ENCODE measurements at regions of chr6 and their contacts with region 1.

Region 1: DNA sequence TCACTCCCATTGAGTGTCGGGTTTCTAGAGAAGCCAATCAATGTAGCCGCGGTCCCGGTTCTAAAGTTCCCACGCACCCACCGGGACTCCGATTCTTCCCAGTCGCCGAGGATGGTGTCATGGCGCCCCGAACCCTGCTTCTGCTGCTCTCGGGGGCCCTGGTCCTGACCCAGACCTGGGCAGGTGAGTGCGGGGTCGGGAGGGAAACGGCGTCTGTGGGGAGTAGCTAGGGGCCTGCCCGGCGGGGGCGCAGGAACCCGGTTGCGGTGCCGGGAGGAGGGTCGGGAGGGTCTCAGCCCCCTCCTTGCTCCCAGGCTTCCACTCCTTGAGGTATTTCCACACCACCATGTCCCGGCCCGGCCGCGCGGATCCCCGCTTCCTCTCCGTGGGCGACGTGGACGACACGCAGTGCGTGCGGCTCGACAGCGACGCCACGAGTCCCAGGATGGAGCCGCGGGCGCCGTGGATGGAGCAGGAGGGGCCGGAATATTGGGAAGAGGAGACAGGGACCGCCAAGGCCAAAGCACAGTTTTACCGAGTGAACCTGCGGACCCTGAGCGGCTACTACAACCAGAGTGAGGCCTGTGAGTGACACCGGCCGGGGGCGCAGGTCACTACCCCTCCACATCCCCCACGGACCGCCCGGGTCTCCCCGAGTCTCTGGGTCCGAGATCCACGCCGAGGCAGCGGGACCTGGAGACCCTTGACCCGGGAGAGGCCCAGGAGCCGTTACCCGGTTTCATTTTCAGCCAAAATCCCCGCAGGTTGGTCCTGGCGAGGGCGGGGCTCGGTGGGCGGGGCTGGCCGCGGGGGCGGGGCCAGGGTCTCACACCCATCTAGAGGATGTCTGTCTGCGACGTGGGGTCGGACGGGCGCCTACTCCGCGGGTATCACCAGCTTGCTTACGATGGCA is 35.2 kb upstream of the HLA-G start:
- DNase-seq: peak; percentile 57 to 87
- ATAC-seq: peak; percentile 86 to 95 (median 87)
- H3K4me3 ChIP-seq: peak overlapping the region; percentile 89
- H3K4me3 Mint-ChIP-seq: peak overlapping the region; percentile 92
- H3K27ac ChIP-seq: peak overlapping the region; percentile 72
- H3K27ac Mint-ChIP-seq: peak overlapping the region; percentile 77 to 84
- H3K4me1 ChIP-seq: peaks cover 18% of the 10 kb centered on the region
- H3K4me1 Mint-ChIP-seq: peaks cover 9 to 19% of the 10 kb centered on the region in 2 donors
- H3K27me3 ChIP-seq: peaks cover 19% of the 10 kb centered on the region
- H3K27me3 Mint-ChIP-seq: peaks cover 45 to 64% of the 10 kb centered on the region in 2 donors
- CTCF ChIP-seq: peak; percentile 37

Region 2: GRCh38 chr6:28985462-28986164 is 806.8 kb before region 1 on chr6:
- intact Hi-C with region 1: no loop called
- DNase-seq: peak in 1 of 2 donors; percentile 34
- ATAC-seq: no peak
- H3K4me3 ChIP-seq: no peak overlapping the region
- H3K4me3 Mint-ChIP-seq: peak overlapping the region; percentile 60
- H3K27ac ChIP-seq: no peak overlapping the region
- H3K27ac Mint-ChIP-seq: no peak overlapping the region
- H3K4me1 ChIP-seq: peaks cover 23% of the 10 kb centered on the region
- H3K4me1 Mint-ChIP-seq: peaks cover 50 to 56% of the 10 kb centered on the region in 2 donors
- H3K27me3 ChIP-seq: peaks cover 15% of the 10 kb centered on the region
- H3K27me3 Mint-ChIP-seq: peaks cover 24 to 35% of the 10 kb centered on the region in 2 donors
- CTCF ChIP-seq: no peak

Region 3: GRCh38 chr6:29705389-29706231 is 86.8 kb before region 1 on chr6:
- intact Hi-C with region 1: loop called (anchors 1 kb)
- DNase-seq: peak in 1 of 2 donors; percentile 73
- ATAC-seq: no peak
- H3K4me3 ChIP-seq: no peak overlapping the region
- H3K4me3 Mint-ChIP-seq: peak overlapping the region; percentile 55
- H3K27ac ChIP-seq: no peak overlapping the region
- H3K27ac Mint-ChIP-seq: peak overlapping the region; percentile 65 to 87
- H3K4me1 ChIP-seq: peaks cover 52% of the 10 kb centered on the region
- H3K4me1 Mint-ChIP-seq: peaks cover 57 to 66% of the 10 kb centered on the region in 2 donors
- H3K27me3 ChIP-seq: peaks cover 6% of the 10 kb centered on the region
- H3K27me3 Mint-ChIP-seq: peaks cover 10 to 17% of the 10 kb centered on the region in 2 donors
- CTCF ChIP-seq: peak; percentile 67

Region 4: DNA sequence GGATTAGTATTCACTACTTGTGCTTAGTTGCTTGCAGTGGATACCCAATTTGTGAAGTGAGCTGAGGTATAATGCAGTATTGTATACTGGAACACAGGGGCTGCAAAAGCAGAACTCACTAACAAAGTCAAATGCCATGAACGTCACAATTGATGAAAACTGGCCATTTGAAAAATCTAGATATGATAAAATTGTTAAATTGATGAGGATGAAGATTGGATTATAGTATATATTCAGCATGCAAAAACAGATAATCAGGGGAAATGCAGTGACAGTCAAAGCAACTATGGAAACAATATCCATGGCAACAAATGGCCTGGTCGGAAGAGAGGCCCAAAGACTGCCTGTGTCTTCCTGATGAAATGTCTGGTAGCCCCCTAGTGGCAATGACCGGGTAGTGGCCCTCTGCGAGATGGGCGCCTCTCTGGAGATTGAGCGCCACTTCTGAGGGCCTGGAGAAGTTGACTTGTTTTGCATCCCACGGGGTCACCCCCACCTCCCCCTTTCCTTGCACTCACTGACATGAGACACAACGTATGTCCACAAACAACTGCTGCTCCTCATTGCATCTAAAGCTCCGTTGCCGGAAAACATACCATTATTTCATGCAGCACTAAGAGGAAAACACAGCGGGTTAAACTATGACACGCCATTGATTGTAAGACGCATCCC is 1276.4 kb after region 1 on chr6:
- intact Hi-C with region 1: no loop called
- DNase-seq: peak; percentile 21 to 85
- ATAC-seq: peak; percentile 77 to 98 (median 84)
- H3K4me3 ChIP-seq: no peak overlapping the region
- H3K4me3 Mint-ChIP-seq: no peak overlapping the region
- H3K27ac ChIP-seq: no peak overlapping the region
- H3K27ac Mint-ChIP-seq: no peak overlapping the region
- H3K4me1 ChIP-seq: no peaks in the 10 kb centered on the region
- H3K4me1 Mint-ChIP-seq: no peaks in the 10 kb centered on the region
- H3K27me3 ChIP-seq: no peaks in the 10 kb centered on the region
- H3K27me3 Mint-ChIP-seq: no peaks in the 10 kb centered on the region
- CTCF ChIP-seq: peak; percentile 62

Measured in natural killer cell (primary cell).